ENCODE measurements at regions of chr3 and their contacts with region 1.

Region 1: DNA sequence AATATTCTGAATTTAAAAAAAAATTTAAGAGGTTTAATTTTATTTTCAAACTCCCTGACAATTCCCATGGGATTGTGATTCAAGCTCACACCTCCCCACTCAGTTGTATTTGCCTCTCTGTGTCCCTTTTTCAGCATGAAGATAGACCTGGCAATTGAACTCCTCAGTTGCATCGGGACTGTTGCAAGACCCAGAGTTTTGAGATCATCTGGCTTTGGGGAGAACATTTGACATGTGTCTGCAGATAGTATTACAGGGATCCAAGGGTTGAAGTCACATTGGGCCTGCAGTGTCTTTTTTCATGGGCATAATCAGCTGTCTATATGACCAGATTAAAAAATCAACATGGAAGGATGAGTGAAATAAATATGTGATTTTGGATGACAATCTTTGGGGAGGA is 91.1 kb upstream of the EOMES start:
- DNase-seq: no peak
- ATAC-seq: no peak
- H3K4me3 ChIP-seq: no peak overlapping the region
- H3K4me3 Mint-ChIP-seq: no peak overlapping the region
- H3K27ac ChIP-seq: no peak overlapping the region
- H3K27ac Mint-ChIP-seq: no peak overlapping the region
- H3K4me1 ChIP-seq: no peaks in the 10 kb centered on the region
- H3K4me1 Mint-ChIP-seq: no peaks in the 10 kb centered on the region
- H3K27me3 ChIP-seq: no peaks in the 10 kb centered on the region
- H3K27me3 Mint-ChIP-seq: no peaks in the 10 kb centered on the region
- CTCF ChIP-seq: no peak

Region 2: DNA sequence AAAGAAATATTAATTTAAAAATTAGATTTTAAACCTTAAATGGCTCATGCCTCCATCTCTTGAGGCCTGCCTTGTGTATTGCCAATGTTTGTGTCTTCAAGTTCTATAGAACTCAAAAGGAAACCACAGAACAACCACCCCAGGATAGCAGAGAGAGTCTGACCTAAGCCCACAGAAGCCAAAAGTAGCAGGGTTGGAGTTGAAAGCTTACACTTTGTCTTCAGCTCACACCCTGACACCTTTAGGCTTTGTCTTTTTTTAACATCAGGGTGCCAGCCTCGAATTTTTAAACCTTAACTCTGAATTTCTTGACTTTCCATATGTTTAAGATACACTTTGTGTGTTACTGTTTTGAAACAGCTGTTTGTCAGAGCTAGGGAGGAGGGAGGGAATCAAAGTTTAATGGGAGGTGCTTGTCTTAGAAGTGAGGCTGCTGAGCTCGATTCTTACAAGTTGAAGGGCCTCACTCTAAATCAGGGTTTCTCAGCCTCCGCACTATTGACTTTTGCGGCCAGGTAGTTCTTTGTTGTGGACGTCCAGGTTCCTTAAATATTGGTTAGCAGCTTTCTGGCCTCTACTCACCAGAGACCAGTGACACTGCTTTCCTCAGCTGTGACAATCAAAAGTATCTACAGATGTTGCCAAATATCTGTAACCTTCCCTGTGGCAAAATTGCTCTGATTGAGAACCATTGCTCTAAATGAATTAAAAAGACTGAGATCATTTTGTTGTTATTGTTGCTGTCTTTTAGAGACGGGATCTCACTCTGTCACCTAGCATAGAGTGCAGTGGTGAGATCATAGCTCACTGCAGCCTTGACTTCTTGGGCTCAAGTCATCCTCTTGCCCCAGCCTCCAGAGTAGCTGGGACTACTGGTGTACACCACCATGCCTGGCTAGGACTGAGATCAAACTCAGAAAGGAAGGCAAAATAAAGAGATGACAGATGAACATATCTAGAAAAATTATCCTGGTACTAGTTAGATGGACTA is 48.1 kb after region 1 on chr3:
- CTCF ChIA-PET with region 1: no interaction called
- POLR2A ChIA-PET with region 1: no interaction called
- intact Hi-C with region 1: loop called in 1 of 2 experiments (anchors 5 kb)
- DNase-seq: peak in 3 of 9 experiments; percentile 22 to 75 (median 64)
- ATAC-seq: peak; percentile 80
- H3K4me3 ChIP-seq: no peak overlapping the region
- H3K4me3 Mint-ChIP-seq: peak overlapping the region; percentile 46
- H3K27ac ChIP-seq: peak overlapping the region in 1 of 2 experiments; percentile 63
- H3K27ac Mint-ChIP-seq: peak overlapping the region; percentile 92
- H3K4me1 ChIP-seq: peaks cover 38% of the 10 kb centered on the region
- H3K4me1 Mint-ChIP-seq: peaks cover 47% of the 10 kb centered on the region
- H3K27me3 ChIP-seq: no peaks in the 10 kb centered on the region
- H3K27me3 Mint-ChIP-seq: no peaks in the 10 kb centered on the region
- CTCF ChIP-seq: no peak

Measured in CD8-positive, alpha-beta T cell (primary cell).